Prostate gland (tissue), 2 donors: ENCODE measurements at regions of chr3 and their contacts with region 1.

Region 1: DNA sequence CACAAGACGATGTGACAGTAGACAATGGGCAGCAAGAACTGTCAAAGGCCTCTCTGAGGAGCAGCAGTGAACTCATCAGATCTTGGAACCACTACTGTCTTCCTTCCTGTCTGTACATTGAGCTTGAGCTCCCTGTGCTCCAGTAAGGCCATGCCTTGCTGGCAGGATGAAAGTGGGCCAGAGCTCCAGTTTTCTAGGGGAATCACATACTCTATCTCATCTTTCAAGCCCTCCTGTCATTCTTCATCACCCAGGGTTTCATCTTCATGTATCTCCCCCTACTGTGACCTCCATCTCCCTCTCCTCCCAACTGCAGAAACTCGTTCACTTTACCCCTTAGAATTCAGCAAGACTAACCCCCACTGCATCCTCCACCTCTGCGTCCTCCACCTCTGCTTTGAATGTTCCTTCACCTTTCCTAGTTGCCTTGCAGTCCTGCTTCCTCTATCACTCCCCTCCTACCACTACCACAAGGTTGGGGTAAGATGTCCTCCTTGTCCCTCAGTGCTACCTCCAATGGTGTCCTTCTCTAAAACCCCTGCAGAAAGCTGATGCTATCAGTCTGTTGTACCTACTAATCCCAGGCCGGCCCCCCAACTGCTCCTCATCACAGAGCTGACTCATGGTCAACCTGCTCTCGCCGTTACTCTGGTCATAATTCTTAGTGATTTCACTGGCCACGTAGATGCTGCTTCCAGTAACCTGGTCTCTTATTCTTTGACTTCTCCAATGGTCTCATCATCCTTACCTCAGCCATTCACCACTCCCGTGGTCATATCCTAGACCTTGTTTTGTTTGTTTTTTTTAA is 22.3 kb downstream of the NKIRAS1 start:
- DNase-seq: no peak
- H3K4me3 ChIP-seq: no peak overlapping the region
- H3K27ac ChIP-seq: no peak overlapping the region
- H3K4me1 ChIP-seq: no peaks in the 10 kb centered on the region
- H3K27me3 ChIP-seq: no peaks in the 10 kb centered on the region
- CTCF ChIP-seq: no peak
- POLR2A ChIP-seq: no peak

Region 2: DNA sequence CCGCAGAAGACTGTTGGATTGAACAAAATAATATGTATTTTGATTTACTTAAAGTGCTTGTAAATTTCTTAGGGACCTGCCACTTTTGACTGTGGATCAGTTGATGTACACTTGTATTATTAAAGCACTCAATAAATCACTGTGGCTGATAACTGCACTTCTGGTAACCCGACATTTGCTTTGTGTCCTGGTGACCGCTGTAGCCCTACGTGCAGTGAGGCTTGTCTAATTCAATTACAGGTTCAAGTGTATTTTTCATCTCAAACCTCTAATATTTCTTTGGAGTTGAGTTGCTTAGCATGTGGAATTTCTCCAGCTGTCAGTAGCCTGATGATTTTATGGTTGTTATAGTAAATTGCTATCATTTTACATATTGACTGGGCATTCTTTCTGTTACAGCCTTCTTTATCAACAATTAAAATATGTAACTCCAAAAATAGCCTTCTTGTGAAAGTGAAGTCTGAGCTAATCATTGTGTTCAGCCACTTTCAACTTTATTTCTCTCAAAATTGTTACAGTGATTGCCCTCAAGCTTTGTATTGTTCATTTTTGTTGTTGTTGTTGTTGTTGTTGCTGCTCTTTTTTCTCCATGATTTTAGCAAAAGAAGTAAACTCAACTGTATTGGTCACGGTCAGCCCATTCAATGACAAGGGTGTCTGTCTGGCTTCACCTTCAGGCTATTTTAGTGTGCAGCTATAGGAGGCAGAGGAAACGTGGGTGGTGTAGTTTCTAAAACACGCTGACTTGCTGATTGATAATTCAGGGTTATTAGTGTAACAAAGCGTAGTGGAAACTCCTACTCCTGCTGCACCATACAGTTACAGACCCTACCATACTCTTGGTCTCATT is 303.8 kb before region 1 on chr3:
- intact Hi-C with region 1: no loop called
- DNase-seq: no peak
- H3K4me3 ChIP-seq: no peak overlapping the region
- H3K27ac ChIP-seq: no peak overlapping the region
- H3K4me1 ChIP-seq: no peaks in the 10 kb centered on the region
- H3K27me3 ChIP-seq: no peaks in the 10 kb centered on the region
- CTCF ChIP-seq: no peak
- POLR2A ChIP-seq: no peak

Region 3: DNA sequence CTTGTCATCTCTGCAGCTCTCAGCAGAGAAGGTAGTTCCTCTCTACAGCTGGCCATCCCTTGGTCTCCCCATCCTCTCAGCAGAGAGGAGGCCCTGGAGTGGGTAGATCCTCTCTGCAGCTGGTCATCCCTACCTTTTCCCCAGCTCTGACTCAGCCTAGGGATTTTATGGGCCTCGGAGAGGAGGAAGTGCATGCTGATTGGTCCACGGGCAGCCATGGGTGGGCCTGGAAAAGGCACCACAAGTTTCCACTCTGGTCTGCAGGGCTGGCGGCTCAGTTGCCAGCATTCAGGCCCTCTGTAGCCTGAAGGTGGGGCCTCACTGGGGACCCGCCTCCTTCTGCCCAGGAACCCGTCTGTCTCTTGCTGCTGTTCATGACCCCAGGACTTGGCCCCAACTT is 87.5 kb after region 1 on chr3:
- intact Hi-C with region 1: loop called (anchors 10 kb)
- DNase-seq: no peak
- H3K4me3 ChIP-seq: no peak overlapping the region
- H3K27ac ChIP-seq: no peak overlapping the region
- H3K4me1 ChIP-seq: no peaks in the 10 kb centered on the region
- H3K27me3 ChIP-seq: no peaks in the 10 kb centered on the region
- CTCF ChIP-seq: no peak
- POLR2A ChIP-seq: no peak